T-cell (primary cell): ENCODE measurements at regions of chr14 and their contacts with region 1.

Region 1: GRCh38 chr14:73895939-73896338 is 9.3 kb downstream of the ZNF410 start:
- DNase-seq: no peak
- ATAC-seq: no peak
- H3K4me3 ChIP-seq: no peak overlapping the region
- H3K4me3 Mint-ChIP-seq: no peak overlapping the region
- H3K27ac ChIP-seq: no peak overlapping the region
- H3K27ac Mint-ChIP-seq: peak overlapping the region; percentile 28 to 37
- H3K4me1 ChIP-seq: no peaks in the 10 kb centered on the region
- H3K4me1 Mint-ChIP-seq: peaks cover 0 to 13% (median 3%) of the 10 kb centered on the region in 3 donors
- H3K27me3 ChIP-seq: no peaks in the 10 kb centered on the region
- H3K27me3 Mint-ChIP-seq: no peaks in the 10 kb centered on the region

Region 2: GRCh38 chr14:73753108-73753958 is 142.6 kb before region 1 on chr14:
- CTCF ChIA-PET with region 1: no interaction called
- POLR2A ChIA-PET with region 1: interaction called in 1 of 2 experiments, 18 read pairs
- DNase-seq: peak in 28 of 35 experiments; percentile 21 to 69 (median 50)
- ATAC-seq: peak; percentile 46 to 65 (median 51)
- H3K4me3 ChIP-seq: peak overlapping the region; percentile 39 to 66
- H3K4me3 Mint-ChIP-seq: peak overlapping the region; percentile 78 to 87 (median 85)
- H3K27ac ChIP-seq: peak overlapping the region; percentile 90
- H3K27ac Mint-ChIP-seq: peak overlapping the region; percentile 95 to 99
- H3K4me1 ChIP-seq: peaks cover 77 to 96% of the 10 kb centered on the region in 2 experiments
- H3K4me1 Mint-ChIP-seq: peaks cover 98 to 100% (median 100%) of the 10 kb centered on the region in 3 donors
- H3K27me3 ChIP-seq: no peaks in the 10 kb centered on the region
- H3K27me3 Mint-ChIP-seq: no peaks in the 10 kb centered on the region